Activated B cell treated with CpG ODN at 0.5 μM for 24 hours (primary cell): ENCODE measurements at regions of chr11 and their contacts with region 1.

Region 1: GRCh38 chr11:100706179-100706578 is 19.1 kb downstream of the ARHGAP42 start:
- DNase-seq: no peak
- ATAC-seq: no peak
- H3K4me3 Mint-ChIP-seq: no peak overlapping the region
- H3K27ac Mint-ChIP-seq: no peak overlapping the region
- H3K4me1 Mint-ChIP-seq: peaks cover 23% of the 10 kb centered on the region
- H3K27me3 Mint-ChIP-seq: no peaks in the 10 kb centered on the region
- CTCF ChIP-seq: no peak

Region 2: GRCh38 chr11:100719809-100720221 is 13.6 kb after region 1 on chr11:
- CTCF ChIA-PET with region 1: no interaction called
- POLR2A ChIA-PET with region 1: no interaction called
- intact Hi-C with region 1: loop called (anchors 2 kb)
- DNase-seq: no peak
- ATAC-seq: no peak
- H3K4me3 Mint-ChIP-seq: no peak overlapping the region
- H3K27ac Mint-ChIP-seq: no peak overlapping the region
- H3K4me1 Mint-ChIP-seq: peaks cover 6% of the 10 kb centered on the region
- H3K27me3 Mint-ChIP-seq: no peaks in the 10 kb centered on the region
- CTCF ChIP-seq: no peak